ENCODE measurements at regions of chr12 and their contacts with region 1.

Region 1: DNA sequence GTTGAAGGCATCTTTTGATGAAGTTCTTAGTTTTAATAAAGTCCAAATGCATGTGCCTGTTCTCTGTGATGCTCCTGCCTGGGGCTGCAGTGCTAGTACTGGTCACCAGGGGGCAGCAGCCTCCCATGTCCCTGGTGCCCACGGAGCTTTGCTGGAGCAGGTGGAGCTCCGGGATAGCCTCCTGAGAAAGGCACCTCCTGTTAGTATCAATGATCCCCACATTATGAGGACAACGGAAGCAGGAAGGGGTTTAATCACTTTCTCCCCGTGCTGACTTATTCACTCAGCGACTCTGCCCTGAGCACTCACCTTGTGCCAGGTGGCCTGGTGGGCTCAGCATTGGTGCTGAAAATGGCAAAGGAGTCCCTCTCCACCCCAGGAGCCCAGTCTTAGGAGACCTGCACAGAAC is 123.0 kb upstream of the PZP start:
- DNase-seq: peak; percentile 72
- H3K4me3 ChIP-seq: peak overlapping the region in 1 of 2 experiments; percentile 50; a peak in 1 of 4 replicates
- H3K27ac ChIP-seq: no peak overlapping the region
- H3K4me1 ChIP-seq: no peaks in the 10 kb centered on the region; a peak in 1 of 4 replicates
- H3K27me3 ChIP-seq: no peaks in the 10 kb centered on the region; the same call in 1 of the 2 replicates
- CTCF ChIP-seq: peak; percentile 93
- EP300 ChIP-seq: no peak
- RAD21 ChIP-seq: peak; percentile 92

Region 2: DNA sequence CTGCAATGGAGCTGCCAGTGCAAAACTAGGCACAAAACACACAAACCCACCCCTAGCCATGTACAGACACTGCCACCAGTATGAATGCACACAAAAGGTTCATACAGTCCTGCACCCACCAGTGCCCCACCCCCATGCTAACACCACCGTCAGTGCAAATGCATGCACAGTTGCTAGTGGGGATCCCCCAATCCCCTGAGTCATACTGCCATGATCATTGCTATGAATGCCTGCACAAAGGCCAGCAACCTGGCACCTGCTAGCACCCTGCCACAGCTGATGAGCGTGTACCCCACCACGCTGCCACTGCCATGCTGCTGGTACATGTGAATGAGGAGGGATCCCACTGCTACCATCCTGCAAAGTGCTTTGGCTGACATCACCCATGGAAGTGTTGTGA is 146.9 kb before region 1 on chr12:
- CTCF ChIA-PET with region 1: no interaction called
- POLR2A ChIA-PET with region 1: no interaction called
- DNase-seq: no peak
- H3K4me3 ChIP-seq: no peak overlapping the region
- H3K27ac ChIP-seq: no peak overlapping the region
- H3K4me1 ChIP-seq: no peaks in the 10 kb centered on the region
- H3K27me3 ChIP-seq: no peaks in the 10 kb centered on the region
- CTCF ChIP-seq: no peak
- EP300 ChIP-seq: no peak
- RAD21 ChIP-seq: no peak

Region 3: DNA sequence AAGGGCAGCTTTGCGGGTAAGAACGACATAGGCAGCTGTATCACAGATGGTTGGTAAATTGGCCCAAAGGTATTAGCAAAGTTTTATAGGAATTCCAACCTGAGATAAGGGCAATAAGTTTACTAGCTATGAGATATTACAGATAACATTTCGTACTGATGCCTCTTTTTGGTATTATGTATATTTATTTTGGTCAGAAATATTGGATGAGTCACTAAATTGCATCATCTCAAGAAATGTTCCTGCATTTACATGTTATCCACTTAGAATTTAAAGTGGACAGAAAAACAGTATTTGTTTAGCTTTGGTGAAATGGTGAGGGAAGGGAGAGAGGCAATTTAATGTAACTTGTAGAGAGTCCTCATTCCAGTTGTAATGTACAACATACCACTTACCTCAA is 57.9 kb before region 1 on chr12:
- CTCF ChIA-PET with region 1: no interaction called
- POLR2A ChIA-PET with region 1: no interaction called
- DNase-seq: no peak
- H3K4me3 ChIP-seq: no peak overlapping the region
- H3K27ac ChIP-seq: no peak overlapping the region
- H3K4me1 ChIP-seq: no peaks in the 10 kb centered on the region
- H3K27me3 ChIP-seq: peaks cover 2% of the 10 kb centered on the region; the same call in 1 of the 2 replicates
- CTCF ChIP-seq: no peak
- EP300 ChIP-seq: no peak
- RAD21 ChIP-seq: no peak

Region 4: DNA sequence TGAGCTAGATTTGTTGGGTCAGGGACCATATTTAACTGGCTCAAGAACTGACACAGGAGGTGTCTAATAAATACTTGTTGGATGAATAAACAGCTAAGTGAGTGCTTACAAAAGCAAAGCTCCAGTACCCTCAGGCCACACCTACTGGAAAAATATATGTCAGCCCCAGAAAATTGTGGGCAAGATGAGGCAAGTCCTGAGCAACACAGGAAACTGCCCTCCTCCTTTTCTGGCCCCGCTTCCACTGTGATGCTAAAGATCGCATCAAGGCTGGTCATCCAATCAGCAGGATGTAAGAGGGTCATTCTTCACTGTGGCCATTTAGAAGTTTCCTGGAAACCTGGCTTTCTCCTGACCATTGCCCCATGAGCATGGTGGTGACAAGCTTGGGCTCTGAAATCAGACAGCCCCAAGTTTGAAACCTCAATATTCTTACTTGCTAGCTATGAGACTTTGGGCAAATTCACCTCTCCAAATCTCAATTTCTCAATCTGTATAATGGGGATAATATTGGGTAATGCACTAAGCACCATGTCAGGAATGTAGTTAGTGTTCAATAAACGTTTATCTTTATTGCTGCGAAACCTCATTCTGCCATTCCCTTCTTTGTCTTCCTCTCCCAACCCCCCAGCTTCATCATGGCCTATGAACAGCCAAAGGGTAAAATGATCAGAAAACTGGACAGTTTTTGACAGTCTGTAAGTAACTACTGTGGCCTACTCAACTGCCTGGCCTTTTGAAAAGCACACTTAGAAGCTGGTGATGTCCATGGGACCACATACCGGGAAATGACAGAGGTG is 16.3 kb after region 1 on chr12:
- CTCF ChIA-PET with region 1: interaction called, 38 read pairs
- POLR2A ChIA-PET with region 1: no interaction called
- DNase-seq: no peak
- H3K4me3 ChIP-seq: no peak overlapping the region
- H3K27ac ChIP-seq: no peak overlapping the region
- H3K4me1 ChIP-seq: no peaks in the 10 kb centered on the region
- H3K27me3 ChIP-seq: no peaks in the 10 kb centered on the region
- CTCF ChIP-seq: no peak
- EP300 ChIP-seq: no peak
- RAD21 ChIP-seq: no peak

Region 5: GRCh38 chr12:9364224-9365176 is 33.3 kb after region 1 on chr12:
- CTCF ChIA-PET with region 1: interaction called, 11 read pairs
- POLR2A ChIA-PET with region 1: no interaction called
- DNase-seq: no peak
- H3K4me3 ChIP-seq: no peak overlapping the region
- H3K27ac ChIP-seq: no peak overlapping the region
- H3K4me1 ChIP-seq: no peaks in the 10 kb centered on the region
- H3K27me3 ChIP-seq: no peaks in the 10 kb centered on the region; the same call in 1 of the 2 replicates
- CTCF ChIP-seq: no peak
- EP300 ChIP-seq: no peak
- RAD21 ChIP-seq: no peak